RWPE1 (cell line): ENCODE measurements at regions of chr2 and their contacts with region 1.

Region 1: DNA sequence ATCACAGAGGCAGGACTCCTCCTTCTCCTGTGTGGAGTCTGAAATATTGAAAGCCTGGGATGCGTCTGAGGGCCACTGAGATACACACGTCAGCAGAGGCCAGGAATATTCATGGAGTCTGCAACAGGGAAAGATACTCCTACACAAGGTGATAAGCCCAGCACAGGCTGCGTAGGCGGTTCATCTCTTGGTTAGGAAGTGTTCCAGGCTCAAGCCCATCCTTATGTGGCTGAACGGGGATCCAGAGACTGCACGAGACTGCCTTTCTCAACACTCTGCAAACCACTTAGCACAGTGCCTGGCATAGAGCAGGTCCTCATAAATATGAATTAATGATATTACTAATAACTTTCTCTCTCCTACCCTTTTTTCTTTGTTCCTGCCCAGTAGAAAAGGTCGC is 29.2 kb upstream of the AGPS start:
- DNase-seq: no peak
- H3K27ac ChIP-seq: no peak overlapping the region
- CTCF ChIP-seq: no peak

Region 2: DNA sequence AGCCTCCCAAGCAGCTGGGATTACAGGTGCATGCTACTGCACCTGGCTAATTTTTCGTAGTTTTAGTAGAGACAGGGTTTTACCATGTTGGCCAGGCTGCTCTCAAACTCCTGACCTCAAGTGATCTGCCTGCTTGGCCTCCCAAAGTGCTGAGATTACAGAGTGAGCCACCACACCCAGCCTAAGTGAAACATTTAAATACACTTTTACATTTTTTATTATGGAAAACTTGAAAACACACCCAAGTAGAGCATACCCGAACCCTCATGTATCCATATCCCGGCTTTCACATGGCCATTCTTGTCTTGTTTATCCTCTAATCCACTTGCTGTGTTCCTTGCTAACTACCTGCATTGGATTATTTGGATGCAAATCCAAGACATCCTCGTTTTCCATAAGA is 16.0 kb after region 1 on chr2:
- CTCF ChIA-PET with region 1: no interaction called
- POLR2A ChIA-PET with region 1: interaction called, 16 read pairs
- DNase-seq: no peak
- H3K27ac ChIP-seq: no peak overlapping the region
- CTCF ChIP-seq: no peak